ENCODE measurements at regions of chr2 and their contacts with region 1.

Region 1: DNA sequence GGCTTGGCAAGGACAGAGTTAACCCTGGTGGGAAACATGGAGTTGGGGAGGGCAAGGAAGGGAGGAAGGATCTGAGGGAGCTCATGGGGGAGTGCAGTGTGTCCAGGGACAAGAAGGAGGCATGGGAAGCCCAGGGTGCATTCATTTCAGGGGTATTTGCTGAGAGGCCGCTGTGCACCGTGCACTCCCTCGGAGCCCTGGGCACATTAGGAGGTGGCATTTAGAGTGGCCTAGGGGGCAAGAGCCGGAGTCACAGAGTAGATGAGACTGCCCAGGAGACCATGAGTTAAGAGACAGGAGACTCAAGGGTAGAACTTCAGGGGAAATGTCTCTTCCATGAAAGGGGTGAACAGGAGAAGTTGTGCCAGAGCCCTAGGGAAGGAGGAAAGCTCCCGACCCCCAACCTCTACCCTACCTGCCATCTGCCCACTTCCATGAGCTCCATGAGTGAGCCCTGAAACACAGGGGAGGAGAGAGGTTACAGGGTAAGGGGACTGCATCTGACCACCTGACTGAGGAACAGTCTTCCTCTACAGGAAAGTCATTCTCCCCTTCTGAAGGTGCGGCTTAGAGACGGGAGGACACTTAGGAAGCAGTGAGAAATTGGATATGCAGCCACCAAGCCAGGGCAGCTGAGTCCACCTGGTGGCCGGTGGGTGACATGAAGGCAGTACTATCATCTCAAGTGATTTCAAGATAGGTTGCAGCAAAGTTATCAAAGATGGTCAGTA is 58.5 kb upstream of the COPS8 start:
- DNase-seq: peak; percentile 83
- H3K4me3 Mint-ChIP-seq: no peak overlapping the region
- H3K27ac Mint-ChIP-seq: no peak overlapping the region
- H3K4me1 Mint-ChIP-seq: no peaks in the 10 kb centered on the region
- H3K27me3 Mint-ChIP-seq: no peaks in the 10 kb centered on the region
- CTCF ChIP-seq: peak; percentile 95

Region 2: DNA sequence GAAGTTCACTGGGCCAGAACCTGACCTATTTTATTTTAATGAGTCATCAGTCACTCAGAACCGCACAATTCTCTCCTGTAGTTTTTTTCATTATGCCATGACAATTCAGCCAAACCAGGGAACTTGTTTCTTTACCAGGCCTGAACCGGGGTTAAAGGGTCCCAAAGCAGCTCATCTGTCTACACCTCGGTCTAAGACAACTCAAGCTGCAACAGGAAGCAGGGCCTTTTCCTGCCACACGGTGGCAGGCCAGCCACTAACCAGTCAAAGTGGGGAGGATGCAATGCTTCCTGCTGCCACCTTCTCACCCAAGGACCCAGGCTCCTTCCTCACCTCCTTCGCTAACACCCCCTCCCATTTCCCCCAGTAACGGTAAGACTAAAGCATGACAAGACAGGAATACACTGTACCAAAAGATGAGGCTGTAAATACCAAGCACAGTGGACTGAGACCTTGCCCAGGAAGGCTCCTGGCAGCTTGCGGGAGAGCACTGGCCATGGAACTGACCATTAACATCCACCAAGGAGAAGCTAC is 514.2 kb before region 1 on chr2:
- CTCF ChIA-PET with region 1: interaction called, 12 read pairs
- intact Hi-C with region 1: loop called (anchors 1 kb)
- DNase-seq: peak; percentile 68
- H3K4me3 Mint-ChIP-seq: no peak overlapping the region
- H3K27ac Mint-ChIP-seq: no peak overlapping the region
- H3K4me1 Mint-ChIP-seq: no peaks in the 10 kb centered on the region
- H3K27me3 Mint-ChIP-seq: peaks cover 14% of the 10 kb centered on the region
- CTCF ChIP-seq: peak; percentile 86

Region 3: GRCh38 chr2:236679884-236680860 is 347.0 kb before region 1 on chr2:
- CTCF ChIA-PET with region 1: no interaction called
- intact Hi-C with region 1: loop called (anchors 10 kb)
- DNase-seq: no peak
- H3K4me3 Mint-ChIP-seq: no peak overlapping the region
- H3K27ac Mint-ChIP-seq: no peak overlapping the region
- H3K4me1 Mint-ChIP-seq: no peaks in the 10 kb centered on the region
- H3K27me3 Mint-ChIP-seq: peaks cover 54% of the 10 kb centered on the region
- CTCF ChIP-seq: no peak

Region 4: DNA sequence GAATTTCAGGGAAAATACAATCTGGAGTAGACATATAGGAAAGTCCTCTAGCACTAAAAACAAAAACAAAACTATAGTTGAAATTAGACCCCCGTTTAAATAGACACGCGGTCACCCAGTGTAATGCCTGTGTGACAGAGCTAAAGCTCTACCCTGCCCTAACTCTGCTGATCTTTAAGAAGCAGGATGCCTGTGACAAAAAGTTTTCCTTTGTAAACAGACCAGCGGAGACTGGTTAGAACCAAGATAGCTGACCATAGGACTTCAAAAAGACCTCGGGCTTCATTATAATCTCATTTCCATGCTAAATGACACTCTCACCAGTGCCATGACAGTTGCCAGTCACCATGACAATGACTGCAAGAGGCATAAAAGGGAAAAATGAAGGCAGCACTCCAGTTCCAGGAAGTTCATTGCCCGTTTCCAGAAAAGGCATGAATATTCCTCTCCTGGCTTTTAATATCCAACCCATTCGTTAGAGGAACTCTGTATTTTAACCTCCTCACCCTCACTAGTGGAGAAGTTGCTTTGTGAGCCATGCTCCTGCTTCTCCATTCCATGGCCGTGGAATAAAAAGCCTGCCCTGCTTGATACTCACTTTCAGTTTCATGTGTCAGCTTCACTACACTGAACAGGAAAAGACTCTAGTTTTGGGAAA is 98.6 kb before region 1 on chr2:
- CTCF ChIA-PET with region 1: no interaction called
- intact Hi-C with region 1: loop called (anchors 10 kb)
- DNase-seq: no peak
- H3K4me3 Mint-ChIP-seq: peak overlapping the region; percentile 33
- H3K27ac Mint-ChIP-seq: no peak overlapping the region
- H3K4me1 Mint-ChIP-seq: no peaks in the 10 kb centered on the region
- H3K27me3 Mint-ChIP-seq: peaks cover 26% of the 10 kb centered on the region
- CTCF ChIP-seq: no peak